ENCODE measurements at regions of chr5 and their contacts with region 1.

Region 1: GRCh38 chr5:149317281-149318048 is 27.8 kb upstream of the GRPEL2 start:
- DNase-seq: peak; percentile 43 to 61 (median 54)
- H3K4me3 ChIP-seq: no peak overlapping the region
- H3K27ac ChIP-seq: no peak overlapping the region
- H3K4me1 ChIP-seq: peaks cover 0 to 11% (median 6%) of the 10 kb centered on the region in 4 experiments
- H3K27me3 ChIP-seq: no peaks in the 10 kb centered on the region

Region 2: GRCh38 chr5:148740966-148741742 is 576.3 kb before region 1 on chr5:
- CTCF ChIA-PET with region 1: no interaction called
- POLR2A ChIA-PET with region 1: no interaction called
- DNase-seq: peak; percentile 72 to 81 (median 74)
- H3K4me3 ChIP-seq: no peak overlapping the region
- H3K27ac ChIP-seq: no peak overlapping the region
- H3K4me1 ChIP-seq: peaks cover 0 to 15% (median 3%) of the 10 kb centered on the region in 4 experiments
- H3K27me3 ChIP-seq: no peaks in the 10 kb centered on the region

Region 3: DNA sequence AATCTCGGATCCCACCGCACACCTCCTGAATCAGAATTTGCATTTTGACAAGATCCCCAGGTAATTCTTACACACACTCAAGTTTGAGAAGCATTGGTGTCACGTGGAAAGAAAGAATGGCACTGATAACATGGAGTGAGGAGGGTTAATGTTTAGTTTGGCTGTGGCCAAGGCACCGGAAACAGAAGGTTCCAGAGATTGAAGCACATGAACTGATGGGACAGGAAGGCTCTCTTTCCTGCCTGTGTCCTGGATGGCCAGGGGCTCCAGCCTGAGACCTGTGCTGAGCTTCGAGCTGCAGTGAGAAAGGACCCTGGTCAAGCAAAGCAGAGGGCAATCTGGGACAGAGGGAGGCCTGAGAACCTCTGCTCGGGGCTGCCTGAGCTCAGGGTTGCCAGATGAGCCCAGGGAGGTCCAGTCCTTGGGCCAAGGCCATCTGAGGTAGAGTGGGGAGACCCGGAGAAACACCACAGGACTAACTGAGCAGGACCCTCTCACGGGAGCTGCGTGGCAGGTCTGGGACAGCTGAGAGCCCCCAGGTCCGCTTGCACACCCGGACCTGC is 18.5 kb before region 1 on chr5:
- CTCF ChIA-PET with region 1: interaction called, 10 read pairs
- POLR2A ChIA-PET with region 1: interaction called, 3 read pairs
- DNase-seq: peak; percentile 82 to 98 (median 97)
- H3K4me3 ChIP-seq: peak overlapping the region in 3 of 7 experiments; percentile 52 to 64 (median 53)
- H3K27ac ChIP-seq: no peak overlapping the region
- H3K4me1 ChIP-seq: peaks cover 9 to 55% (median 37%) of the 10 kb centered on the region in 4 experiments
- H3K27me3 ChIP-seq: no peaks in the 10 kb centered on the region

Region 4: DNA sequence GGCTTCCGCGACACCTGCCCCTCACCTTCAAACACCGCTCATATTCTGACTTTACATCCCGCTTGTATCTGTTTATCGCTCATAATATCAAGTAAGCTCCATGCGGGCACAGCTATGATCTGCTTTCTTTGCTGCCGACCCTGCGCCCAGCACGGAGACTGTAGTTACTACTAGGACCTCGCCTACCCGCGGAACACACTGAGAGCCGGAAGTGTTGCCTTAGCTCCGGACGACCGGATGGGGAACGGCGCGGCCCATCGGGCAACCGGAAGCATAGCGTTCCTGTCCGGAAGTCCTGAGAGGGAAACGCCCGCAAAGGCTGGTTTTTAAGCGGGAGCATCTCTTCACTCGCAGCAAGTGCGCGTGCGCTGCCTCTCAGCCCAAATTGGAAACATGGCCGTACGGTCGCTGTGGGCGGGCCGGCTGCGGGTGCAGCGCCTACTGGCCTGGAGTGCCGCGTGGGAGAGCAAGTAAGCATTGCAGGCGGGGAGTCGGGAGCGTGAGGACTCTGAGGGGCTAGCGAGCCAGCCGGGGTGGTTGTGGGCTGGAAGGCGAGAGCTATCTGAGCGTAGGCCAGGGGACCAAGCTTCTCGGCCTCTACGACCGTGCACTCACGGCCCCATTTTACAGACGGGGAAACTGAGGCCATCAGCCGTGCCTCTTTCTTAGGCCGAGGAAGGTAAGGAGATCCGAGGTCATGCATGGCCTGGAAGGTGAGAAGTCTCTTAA is 27.8 kb after region 1 on chr5 and contains the start of gene GRPEL2:
- CTCF ChIA-PET with region 1: interaction called, 13 read pairs
- POLR2A ChIA-PET with region 1: interaction called, 5 read pairs
- DNase-seq: peak; percentile 86 to 92 (median 91)
- H3K4me3 ChIP-seq: peak within 1 kb of the TSS; percentile 60 to 97 (median 83)
- H3K27ac ChIP-seq: peak within 1 kb of the TSS in 1 of 2 experiments; percentile 69
- H3K4me1 ChIP-seq: peaks cover 9 to 35% (median 25%) of the 10 kb centered on the region in 4 experiments
- H3K27me3 ChIP-seq: no peaks in the 10 kb centered on the region

Region 5: DNA sequence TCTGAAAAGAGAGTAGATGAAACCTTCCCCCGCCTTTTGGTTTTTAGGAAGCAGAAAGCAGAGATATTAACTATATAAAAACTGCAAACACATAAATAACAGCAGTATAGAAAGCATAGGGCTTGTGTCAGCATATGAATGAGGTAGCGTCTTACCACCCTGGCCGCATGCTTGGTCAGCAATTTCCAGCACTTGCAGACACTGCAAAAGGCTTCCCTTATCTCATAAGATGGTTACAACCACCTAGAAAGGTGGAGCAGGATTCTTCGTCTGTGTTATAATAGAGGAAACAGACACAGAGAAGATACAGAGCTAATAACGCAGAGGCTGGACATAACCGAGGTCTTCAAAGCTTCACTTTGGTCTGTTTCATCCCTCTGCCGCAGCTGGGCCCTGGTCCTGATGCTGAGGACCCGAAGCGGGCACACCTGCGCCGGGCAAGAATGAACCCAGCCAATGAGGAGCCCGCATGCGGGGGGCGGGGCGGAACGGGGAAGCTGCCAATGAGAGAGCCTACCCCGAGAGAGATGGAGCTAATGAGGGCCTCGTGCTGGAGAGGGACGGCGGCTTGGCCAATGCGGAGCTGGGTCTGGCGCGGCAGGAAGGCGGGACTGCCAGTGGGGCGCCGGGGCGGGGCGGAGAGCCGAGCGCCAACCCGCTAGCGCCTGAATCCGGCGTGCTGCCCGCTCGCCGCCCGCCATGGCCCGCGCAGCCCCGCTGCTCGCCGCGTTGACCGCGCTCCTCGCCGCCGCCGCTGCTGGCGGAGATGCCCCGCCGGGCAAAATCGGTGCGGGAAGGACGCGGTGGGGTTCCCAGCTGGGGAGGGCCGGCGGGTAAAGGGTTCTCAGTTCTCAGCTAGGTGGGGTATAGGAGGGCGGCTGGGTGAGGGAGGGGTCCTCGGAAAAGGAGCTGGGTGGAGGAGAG is 40.2 kb after region 1 on chr5 and contains the start of gene PCYOX1L:
- CTCF ChIA-PET with region 1: interaction called, 17 read pairs
- POLR2A ChIA-PET with region 1: no interaction called
- DNase-seq: peak; percentile 92 to 96 (median 93)
- H3K4me3 ChIP-seq: peak within 1 kb of the TSS; percentile 67 to 92 (median 82)
- H3K27ac ChIP-seq: peak within 1 kb of the TSS in 1 of 2 experiments; percentile 73
- H3K4me1 ChIP-seq: peaks cover 2 to 34% (median 13%) of the 10 kb centered on the region in 4 experiments
- H3K27me3 ChIP-seq: no peaks in the 10 kb centered on the region